ENCODE measurements at regions of chr1 and their contacts with region 1.

Region 1: DNA sequence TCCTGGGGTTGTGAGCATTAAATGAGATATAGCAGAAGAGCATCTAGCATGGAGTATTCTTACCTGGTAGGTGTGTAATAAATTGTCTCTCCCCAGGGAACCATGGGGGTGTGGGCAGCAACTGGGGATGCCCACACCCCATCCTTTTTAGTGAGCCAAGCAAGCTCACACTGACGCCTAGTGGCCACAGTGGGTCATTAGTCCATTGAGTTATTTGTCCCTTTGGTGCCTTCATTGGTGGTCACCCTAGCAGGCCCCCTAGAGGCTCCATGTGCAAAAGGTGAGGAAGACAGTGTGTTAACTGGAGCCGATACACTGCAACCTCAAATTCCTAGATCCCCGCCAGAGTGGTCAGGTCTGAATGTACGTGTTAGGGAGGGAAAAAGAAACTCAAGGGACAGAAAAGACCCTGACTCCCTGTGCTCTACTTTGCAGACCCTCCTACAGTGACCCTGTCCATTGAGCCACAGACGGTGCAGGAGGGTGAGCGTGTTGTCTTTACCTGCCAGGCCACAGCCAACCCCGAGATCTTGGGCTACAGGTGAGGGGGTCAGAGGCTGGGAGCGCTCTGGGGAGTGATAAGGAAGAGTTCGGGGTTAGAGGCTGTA is 93.3 kb upstream of the CD1D start:
- DNase-seq: no peak
- ATAC-seq: peak; percentile 81
- H3K4me3 ChIP-seq: no peak overlapping the region
- H3K27ac ChIP-seq: no peak overlapping the region
- H3K4me1 ChIP-seq: no peaks in the 10 kb centered on the region
- H3K27me3 ChIP-seq: no peaks in the 10 kb centered on the region
- CTCF ChIP-seq: peak; percentile 87

Region 2: DNA sequence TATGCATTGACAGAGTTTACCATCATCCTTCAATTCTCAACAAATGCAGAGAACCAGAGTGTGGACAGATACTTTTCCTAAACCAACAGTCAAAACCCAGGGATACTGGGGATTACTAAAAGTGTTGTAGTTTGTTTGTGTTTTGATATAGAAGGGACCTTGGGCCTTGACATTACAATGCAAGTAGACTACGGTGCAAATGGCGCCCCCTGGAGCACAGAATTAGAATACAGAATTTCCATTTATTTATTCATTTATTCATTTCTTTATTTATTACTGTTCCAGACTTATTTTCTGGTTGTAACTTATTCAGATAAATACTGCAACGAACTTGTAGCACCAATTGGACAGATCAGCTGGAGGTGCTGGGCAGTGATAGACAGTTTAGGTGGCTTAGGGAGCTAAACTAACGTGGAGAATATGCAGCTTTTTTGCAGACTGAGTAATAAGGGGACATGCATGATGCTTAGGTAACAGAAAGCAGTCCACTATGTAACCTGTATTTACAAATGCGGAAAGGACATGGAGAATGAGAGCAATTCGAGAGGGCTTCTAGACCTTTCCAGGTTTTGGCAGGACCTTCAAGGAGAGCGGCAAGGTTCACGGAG is 51.3 kb before region 1 on chr1:
- intact Hi-C with region 1: loop called (anchors 10 kb)
- DNase-seq: no peak
- ATAC-seq: peak; percentile 57
- H3K4me3 ChIP-seq: no peak overlapping the region
- H3K27ac ChIP-seq: no peak overlapping the region
- H3K4me1 ChIP-seq: peaks cover 23% of the 10 kb centered on the region
- H3K27me3 ChIP-seq: no peaks in the 10 kb centered on the region
- CTCF ChIP-seq: peak; percentile 72

Measured in upper lobe of right lung (tissue), 1 donor.